ENCODE measurements at regions of chr7 and their contacts with region 1.

Region 1: DNA sequence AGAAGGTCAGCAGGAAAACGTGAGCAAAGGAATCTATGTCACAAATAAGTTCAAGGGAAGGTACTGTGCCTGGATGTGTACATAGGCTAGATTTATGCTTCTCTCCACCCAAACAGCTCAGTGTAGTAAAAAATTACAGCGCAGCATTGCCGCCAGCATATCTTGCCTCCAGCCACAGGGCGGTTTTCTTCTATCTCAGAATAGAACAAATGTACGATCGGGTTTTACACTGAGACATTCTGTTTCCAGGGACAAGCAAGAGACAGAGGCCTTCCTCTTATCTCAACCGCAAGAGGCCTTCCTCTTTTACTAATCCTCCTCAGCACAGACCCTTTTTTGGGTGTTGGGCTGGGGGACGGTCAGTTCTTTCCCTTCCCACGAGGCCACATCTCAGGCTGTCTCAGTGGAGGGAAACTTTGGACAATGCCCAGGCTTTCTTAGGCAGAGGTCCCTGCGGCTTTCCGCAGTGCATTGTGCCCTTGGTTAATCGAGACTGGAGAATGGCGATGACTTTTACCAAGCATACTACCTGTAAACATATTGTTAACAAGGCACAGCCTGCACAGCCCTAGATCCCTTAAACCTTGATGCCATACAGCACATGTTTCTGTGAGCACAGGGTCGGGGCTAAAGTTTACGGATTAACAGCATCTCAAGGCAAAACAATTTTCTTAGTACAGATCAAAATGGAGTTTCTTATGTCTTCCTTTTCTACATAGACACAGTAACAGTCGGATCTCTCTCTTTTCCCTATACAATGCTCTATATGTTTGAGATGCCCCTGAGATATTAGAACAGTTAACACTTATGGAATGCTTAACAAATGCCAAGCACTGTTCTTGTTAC is 11.6 kb upstream of the ABHD11 start:
- DNase-seq: no peak
- H3K4me3 ChIP-seq: no peak overlapping the region
- H3K27ac ChIP-seq: no peak overlapping the region
- H3K4me1 ChIP-seq: no peaks in the 10 kb centered on the region
- H3K27me3 ChIP-seq: no peaks in the 10 kb centered on the region
- CTCF ChIP-seq: no peak
- POLR2A ChIP-seq: no peak

Region 2: DNA sequence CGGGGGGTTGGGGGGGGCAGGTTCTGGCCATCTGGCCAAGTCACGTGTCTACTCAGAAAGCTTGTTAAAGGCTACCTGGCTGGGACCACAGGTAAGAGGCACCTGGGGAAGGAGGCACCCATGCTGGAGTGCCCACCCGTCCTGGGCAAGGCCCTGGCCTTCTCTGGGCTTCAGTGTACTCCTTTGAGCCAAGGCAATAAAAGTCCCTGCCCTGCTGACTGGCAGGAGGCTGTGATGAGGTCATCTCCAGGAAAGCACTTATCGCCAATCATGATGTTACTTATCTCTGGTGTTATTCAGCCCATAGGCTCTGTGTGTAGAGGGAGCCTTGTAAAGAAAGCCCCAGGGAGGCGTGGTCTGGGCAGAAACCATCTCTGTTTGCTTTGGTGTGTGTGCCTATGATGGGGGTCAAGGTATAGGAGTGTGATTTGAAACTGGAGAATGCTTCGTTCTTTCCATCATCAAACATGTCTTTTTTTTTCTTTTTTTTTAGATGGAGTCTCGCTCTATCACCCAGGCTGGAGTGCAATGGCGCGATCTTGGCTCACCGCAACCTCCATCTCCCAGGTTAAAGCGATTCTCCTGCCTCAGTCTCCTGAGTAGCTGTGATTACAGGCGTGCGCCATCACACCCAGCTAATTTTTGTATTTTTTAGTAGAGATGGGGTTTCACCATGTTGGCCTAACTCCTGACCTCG is 78.1 kb after region 1 on chr7:
- intact Hi-C with region 1: loop called (anchors 10 kb)
- DNase-seq: no peak
- H3K4me3 ChIP-seq: no peak overlapping the region
- H3K27ac ChIP-seq: no peak overlapping the region
- H3K4me1 ChIP-seq: peaks cover 13% of the 10 kb centered on the region
- H3K27me3 ChIP-seq: no peaks in the 10 kb centered on the region
- CTCF ChIP-seq: no peak
- POLR2A ChIP-seq: no peak